A673 (cell line): ENCODE measurements at regions of chr19 and their contacts with region 1.

Region 1: DNA sequence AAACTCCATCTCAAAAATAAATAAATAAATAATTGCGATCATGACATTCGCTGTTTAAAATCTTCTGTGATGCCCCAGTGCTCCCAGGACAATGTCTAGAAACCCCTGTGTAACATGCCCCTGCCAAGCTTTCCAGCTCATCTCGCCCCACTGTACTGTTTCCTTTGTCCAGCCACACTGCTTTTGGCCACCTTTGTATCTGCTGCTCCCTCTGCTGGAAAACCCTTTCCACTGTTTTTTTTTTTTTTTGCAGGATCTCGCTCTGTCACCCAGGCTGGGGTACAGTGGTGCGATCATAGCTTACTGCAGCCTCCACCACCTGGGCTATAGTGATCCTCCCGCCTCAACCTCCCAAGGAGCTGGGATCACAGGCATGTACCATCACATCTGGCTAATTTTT is 7.5 kb downstream of the PLAUR start:
- DNase-seq: peak; percentile 42
- H3K4me3 ChIP-seq: no peak overlapping the region
- H3K27ac ChIP-seq: no peak overlapping the region
- H3K4me1 ChIP-seq: peaks cover 5% of the 10 kb centered on the region
- H3K27me3 ChIP-seq: no peaks in the 10 kb centered on the region
- CTCF ChIP-seq: peak; percentile 58

Region 2: GRCh38 chr19:41939861-41940730 is 1722.4 kb before region 1 on chr19:
- CTCF ChIA-PET with region 1: no interaction called
- POLR2A ChIA-PET with region 1: interaction called, 12 read pairs
- intact Hi-C with region 1: no loop called
- DNase-seq: peak; percentile 64
- H3K4me3 ChIP-seq: peak overlapping the region; percentile 62
- H3K27ac ChIP-seq: peak overlapping the region; percentile 79
- H3K4me1 ChIP-seq: peaks cover 25% of the 10 kb centered on the region
- H3K27me3 ChIP-seq: no peaks in the 10 kb centered on the region
- CTCF ChIP-seq: no peak

Region 3: DNA sequence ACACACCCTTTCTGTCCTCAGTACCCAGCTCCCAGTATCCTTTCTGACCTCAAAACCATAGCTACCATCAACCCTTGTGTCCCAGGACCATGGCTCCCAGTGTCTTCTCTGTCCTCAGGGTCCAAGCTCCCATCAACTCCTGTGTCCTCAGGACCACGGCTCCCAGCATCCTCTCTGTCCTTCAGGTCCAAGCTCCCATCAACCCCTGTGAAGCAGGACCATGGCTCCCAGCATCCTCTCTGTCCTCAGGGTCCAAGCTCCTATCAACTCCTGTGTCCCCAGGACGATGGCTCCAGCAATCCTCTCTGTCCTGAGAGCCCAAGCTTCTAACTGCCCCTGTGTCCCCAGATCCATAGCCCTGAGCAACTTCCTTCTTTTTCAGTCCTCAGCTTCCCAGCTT is 21.2 kb before region 1 on chr19:
- CTCF ChIA-PET with region 1: no interaction called
- POLR2A ChIA-PET with region 1: interaction called, 13 read pairs
- intact Hi-C with region 1: no loop called
- DNase-seq: no peak
- H3K4me3 ChIP-seq: no peak overlapping the region
- H3K27ac ChIP-seq: no peak overlapping the region
- H3K4me1 ChIP-seq: peaks cover 11% of the 10 kb centered on the region
- H3K27me3 ChIP-seq: no peaks in the 10 kb centered on the region
- CTCF ChIP-seq: no peak

Region 4: DNA sequence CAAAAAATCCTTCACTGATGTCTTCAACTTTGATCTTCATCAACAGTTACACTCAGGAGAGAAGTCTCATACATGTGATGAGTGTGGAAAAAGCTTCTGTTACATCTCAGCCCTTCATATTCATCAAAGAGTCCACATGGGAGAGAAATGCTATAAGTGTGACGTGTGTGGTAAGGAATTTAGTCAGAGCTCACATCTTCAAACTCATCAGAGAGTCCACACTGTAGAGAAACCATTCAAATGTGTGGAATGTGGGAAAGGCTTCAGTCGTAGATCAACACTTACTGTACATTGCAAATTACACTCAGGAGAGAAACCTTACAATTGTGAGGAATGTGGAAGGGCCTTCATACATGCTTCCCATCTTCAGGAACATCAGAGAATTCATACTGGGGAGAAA is 494.0 kb after region 1 on chr19:
- CTCF ChIA-PET with region 1: no interaction called
- POLR2A ChIA-PET with region 1: no interaction called
- intact Hi-C with region 1: no loop called
- DNase-seq: no peak
- H3K4me3 ChIP-seq: no peak overlapping the region
- H3K27ac ChIP-seq: no peak overlapping the region
- H3K4me1 ChIP-seq: no peaks in the 10 kb centered on the region
- H3K27me3 ChIP-seq: no peaks in the 10 kb centered on the region
- CTCF ChIP-seq: no peak